MCF 10A (cell line): ENCODE measurements at regions of chr5 and their contacts with region 1.

Region 1: DNA sequence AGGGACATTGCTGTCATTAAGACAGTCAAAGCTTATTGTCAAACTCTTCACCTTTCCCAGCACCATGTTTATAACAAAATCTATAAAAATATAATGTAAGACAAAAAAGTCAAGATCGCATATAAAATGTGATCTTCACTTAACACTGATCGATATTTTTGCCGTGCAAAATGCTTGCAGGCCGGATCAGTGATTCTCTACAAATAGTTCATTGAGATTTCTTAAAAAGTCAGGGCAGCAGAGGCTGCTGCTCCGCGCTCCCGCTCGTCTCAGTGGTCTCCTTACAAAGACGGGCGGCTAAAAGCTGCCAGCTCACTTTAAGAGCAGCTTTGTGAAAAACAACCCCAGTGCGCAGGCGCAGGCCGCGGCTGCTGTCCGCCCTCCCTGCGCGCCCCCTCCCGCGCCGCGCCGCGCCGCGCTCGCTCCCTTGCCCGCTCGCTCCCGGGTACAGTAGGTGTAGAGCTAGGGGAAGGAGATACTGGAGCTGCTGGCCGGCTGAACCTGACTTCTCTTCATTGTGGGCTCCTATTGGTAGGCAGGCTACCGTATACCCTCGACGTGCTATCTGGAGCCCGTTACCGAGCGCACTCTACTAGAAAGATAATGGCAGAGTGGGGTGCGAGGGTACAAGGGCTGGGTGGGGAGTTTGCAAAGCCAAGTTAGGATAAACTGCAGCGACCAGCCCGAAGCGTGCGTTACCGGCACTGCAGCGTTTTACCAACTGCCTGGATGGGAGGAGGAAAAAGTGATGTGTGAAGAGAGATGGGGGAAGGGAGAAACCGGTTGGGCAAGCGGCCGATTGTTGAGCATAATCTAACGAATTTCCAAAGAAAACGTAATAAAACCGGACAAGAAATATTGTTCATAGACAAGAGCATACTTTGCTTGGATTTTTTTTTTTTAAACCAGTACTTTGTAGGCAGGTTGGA is at the start of gene ARRDC3:
- DNase-seq: peak; percentile 96
- H3K4me3 Mint-ChIP-seq: peak within 1 kb of the TSS; percentile 80
- H3K27ac Mint-ChIP-seq: peak within 1 kb of the TSS; percentile 99
- H3K4me1 Mint-ChIP-seq: no peaks in the 10 kb centered on the region
- H3K27me3 Mint-ChIP-seq: no peaks in the 10 kb centered on the region
- CTCF ChIP-seq: no peak
- total RNA-seq, gene ARRDC3: 35.5 and 41.6 TPM in 2 replicates

Region 2: DNA sequence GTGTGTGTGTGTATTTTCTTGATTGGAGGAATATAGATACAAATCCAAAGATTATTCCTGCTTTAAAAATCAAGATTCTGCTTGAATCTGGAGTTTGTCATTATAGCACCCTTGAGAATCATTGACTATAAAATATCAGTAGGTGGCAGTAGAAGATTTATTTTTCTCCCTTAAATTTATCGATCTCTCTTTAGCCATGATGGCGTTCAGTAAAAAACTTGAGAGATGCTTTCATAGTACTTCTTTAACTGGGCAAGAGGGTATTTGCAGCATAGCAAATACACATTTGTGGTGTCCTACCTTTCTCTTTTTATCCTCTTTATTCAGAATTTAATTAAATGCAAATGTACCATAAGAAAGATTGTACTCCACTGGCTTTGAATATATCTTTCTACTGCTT is 517.0 kb before region 1 on chr5:
- CTCF ChIA-PET with region 1: interaction called, 175 read pairs
- POLR2A ChIA-PET with region 1: interaction called, 45 read pairs
- intact Hi-C with region 1: loop called (anchors 1 kb)
- DNase-seq: peak; percentile 29
- H3K4me3 Mint-ChIP-seq: no peak overlapping the region
- H3K27ac Mint-ChIP-seq: no peak overlapping the region
- H3K4me1 Mint-ChIP-seq: no peaks in the 10 kb centered on the region
- H3K27me3 Mint-ChIP-seq: no peaks in the 10 kb centered on the region
- CTCF ChIP-seq: peak; percentile 39

Region 3: DNA sequence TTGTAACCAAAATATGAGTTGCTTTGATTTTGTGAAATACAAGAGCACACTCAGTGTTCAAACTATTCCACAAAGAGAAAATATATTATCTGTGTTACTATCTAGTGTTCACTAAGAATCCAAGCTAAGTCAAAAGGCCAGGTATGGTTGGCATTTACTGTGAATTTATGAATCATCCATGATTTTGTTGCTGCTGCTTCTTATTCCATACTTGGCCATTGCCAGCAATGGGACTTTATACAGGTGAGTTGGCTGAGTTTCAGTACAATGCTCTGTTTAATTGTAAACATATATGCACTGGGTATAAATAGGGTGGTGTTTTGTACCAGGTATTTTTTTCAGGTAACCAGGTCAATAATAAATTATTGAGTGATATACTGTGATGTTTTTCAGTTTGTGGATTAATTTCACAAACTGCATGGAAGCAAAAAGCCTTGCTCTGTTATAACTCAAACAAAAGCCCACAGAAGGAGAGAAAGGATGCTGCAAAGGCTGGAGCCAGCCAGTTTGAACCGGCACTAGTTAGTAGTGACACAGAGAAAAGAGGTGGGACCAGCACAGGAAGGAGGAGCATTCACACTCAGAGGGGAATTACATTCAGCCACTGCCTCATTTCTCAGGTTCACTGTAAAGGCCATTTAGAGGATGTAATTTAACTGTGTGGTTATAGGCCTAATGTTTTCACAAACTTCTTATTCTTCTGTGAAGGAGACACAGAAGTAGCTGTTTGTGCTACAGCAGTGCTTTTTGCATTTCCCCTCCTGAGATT is 442.9 kb before region 1 on chr5:
- CTCF ChIA-PET with region 1: interaction called, 96 read pairs
- POLR2A ChIA-PET with region 1: interaction called, 64 read pairs
- intact Hi-C with region 1: no loop called
- DNase-seq: peak; percentile 42
- H3K4me3 Mint-ChIP-seq: no peak overlapping the region
- H3K27ac Mint-ChIP-seq: peak overlapping the region; percentile 20
- H3K4me1 Mint-ChIP-seq: peaks cover 19% of the 10 kb centered on the region
- H3K27me3 Mint-ChIP-seq: no peaks in the 10 kb centered on the region
- CTCF ChIP-seq: no peak

Region 4: GRCh38 chr5:91110686-91111085 is 272.6 kb before region 1 on chr5:
- CTCF ChIA-PET with region 1: interaction called, 11 read pairs
- POLR2A ChIA-PET with region 1: interaction called, 13 read pairs
- intact Hi-C with region 1: no loop called
- DNase-seq: peak; percentile 12
- H3K4me3 Mint-ChIP-seq: no peak overlapping the region
- H3K27ac Mint-ChIP-seq: peak overlapping the region; percentile 16
- H3K4me1 Mint-ChIP-seq: peaks cover 6% of the 10 kb centered on the region
- H3K27me3 Mint-ChIP-seq: no peaks in the 10 kb centered on the region
- CTCF ChIP-seq: no peak

Region 5: GRCh38 chr5:91225848-91226686 is 157.2 kb before region 1 on chr5:
- CTCF ChIA-PET with region 1: interaction called, 91 read pairs
- POLR2A ChIA-PET with region 1: interaction called, 48 read pairs
- intact Hi-C with region 1: loop called (anchors 1 kb)
- DNase-seq: peak; percentile 70
- H3K4me3 Mint-ChIP-seq: no peak overlapping the region
- H3K27ac Mint-ChIP-seq: no peak overlapping the region
- H3K4me1 Mint-ChIP-seq: peaks cover 22% of the 10 kb centered on the region
- H3K27me3 Mint-ChIP-seq: no peaks in the 10 kb centered on the region
- CTCF ChIP-seq: peak; percentile 65

Region 6: DNA sequence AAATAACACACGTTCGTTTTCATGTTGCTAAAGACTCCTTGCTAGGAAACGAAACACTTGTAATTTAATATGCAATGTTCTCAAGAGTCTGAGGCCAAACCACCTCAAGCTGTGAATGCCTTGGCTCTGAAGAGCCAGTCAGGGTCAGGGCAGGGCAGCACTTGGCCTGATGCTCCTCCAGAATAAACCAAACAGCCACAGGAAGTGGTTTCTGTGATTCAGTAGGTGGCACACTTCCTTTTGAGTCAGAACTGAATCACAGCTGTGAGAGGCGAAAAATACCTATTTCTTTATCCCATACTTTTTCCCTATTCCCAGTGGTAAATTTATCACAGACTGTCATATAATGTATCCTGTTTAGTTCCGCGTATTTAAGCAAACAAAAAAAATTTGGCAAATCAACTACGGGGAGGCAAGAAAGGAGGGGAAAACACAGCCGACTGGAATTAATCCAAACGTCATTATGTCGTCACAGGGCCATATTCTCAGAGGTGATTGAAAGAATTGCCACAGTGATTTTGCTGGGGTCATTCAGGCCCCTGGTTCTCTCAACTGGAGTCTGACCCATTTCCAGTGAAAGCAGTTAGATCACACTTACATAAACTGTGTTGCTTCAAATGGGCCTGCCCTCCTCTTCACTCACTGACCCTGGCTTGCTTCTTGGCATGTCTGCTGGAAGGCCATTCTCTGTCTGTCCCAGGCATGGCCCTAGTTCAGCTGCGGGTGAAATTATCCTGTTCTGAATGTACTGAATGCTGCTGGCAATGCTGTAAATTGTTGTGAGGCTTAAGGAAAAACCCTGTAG is 71.4 kb before region 1 on chr5:
- CTCF ChIA-PET with region 1: interaction called, 7 read pairs
- POLR2A ChIA-PET with region 1: interaction called, 49 read pairs
- intact Hi-C with region 1: loop called (anchors 1 kb)
- DNase-seq: peak; percentile 98
- H3K4me3 Mint-ChIP-seq: peak overlapping the region; percentile 50
- H3K27ac Mint-ChIP-seq: peak overlapping the region; percentile 91
- H3K4me1 Mint-ChIP-seq: peaks cover 43% of the 10 kb centered on the region
- H3K27me3 Mint-ChIP-seq: no peaks in the 10 kb centered on the region
- CTCF ChIP-seq: no peak

Region 7: DNA sequence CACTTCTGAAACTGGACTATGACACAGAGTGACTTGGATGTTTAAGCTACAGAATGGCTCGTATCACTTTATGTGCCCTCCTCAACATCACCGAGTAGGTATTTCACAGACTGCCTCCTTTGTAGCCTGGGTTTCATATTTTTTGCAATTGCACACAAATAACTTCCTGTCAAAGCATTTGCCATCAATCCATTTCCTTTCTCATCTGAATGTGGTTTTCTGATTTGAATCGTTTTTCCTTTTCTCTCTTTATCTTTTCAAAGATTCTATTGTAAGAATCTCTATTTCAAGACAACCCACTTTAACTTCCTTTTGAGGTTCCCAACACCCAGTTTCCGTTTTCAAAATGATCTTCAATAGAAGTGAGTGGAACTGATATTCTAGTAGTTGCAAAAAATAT is 563.6 kb after region 1 on chr5:
- CTCF ChIA-PET with region 1: no interaction called
- POLR2A ChIA-PET with region 1: no interaction called
- intact Hi-C with region 1: no loop called
- DNase-seq: no peak
- H3K4me3 Mint-ChIP-seq: no peak overlapping the region
- H3K27ac Mint-ChIP-seq: no peak overlapping the region
- H3K4me1 Mint-ChIP-seq: no peaks in the 10 kb centered on the region
- H3K27me3 Mint-ChIP-seq: peaks cover 88% of the 10 kb centered on the region
- CTCF ChIP-seq: no peak